Mammary epithelial cell (primary cell): ENCODE measurements at regions of chr12 and their contacts with region 1.

Region 1: GRCh38 chr12:98198261-98198982 is 317.0 kb upstream of the TMPO start:
- DNase-seq: peak; percentile 16
- H3K4me3 ChIP-seq: no peak overlapping the region
- H3K27ac ChIP-seq: no peak overlapping the region
- H3K4me1 ChIP-seq: no peaks in the 10 kb centered on the region
- H3K27me3 ChIP-seq: no peaks in the 10 kb centered on the region
- CTCF ChIP-seq: no peak

Region 2: DNA sequence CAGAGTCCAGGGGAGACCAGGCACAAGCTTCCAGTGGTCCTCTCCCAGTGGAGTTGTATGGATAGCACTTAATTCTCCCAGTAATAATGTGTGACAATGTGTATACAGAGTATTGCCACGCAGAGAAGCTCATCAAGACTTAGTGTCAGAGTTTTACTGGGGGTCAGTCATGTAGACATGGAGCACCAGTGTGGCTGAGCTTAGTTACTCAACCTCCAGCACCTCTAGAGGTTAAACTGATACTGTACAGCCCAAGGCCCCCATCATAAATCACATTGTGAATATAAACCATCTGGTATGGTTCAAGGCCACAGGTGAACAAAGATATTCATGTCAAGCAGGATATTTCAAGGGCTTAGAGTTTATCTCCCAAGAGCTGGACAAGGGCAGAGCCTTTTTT is 61.1 kb before region 1 on chr12:
- CTCF ChIA-PET with region 1: no interaction called
- dilution Hi-C with region 1: loop called (anchors 10 kb)
- in situ Hi-C with region 1: no loop called
- intact Hi-C with region 1: no loop called
- DNase-seq: no peak
- H3K4me3 ChIP-seq: no peak overlapping the region
- H3K27ac ChIP-seq: no peak overlapping the region
- H3K4me1 ChIP-seq: no peaks in the 10 kb centered on the region
- H3K27me3 ChIP-seq: peaks cover 3% of the 10 kb centered on the region
- CTCF ChIP-seq: no peak

Region 3: GRCh38 chr12:98259693-98260092 is 61.3 kb after region 1 on chr12:
- CTCF ChIA-PET with region 1: no interaction called
- dilution Hi-C with region 1: loop called (anchors 5 kb)
- in situ Hi-C with region 1: no loop called
- intact Hi-C with region 1: no loop called
- DNase-seq: no peak
- H3K4me3 ChIP-seq: no peak overlapping the region
- H3K27ac ChIP-seq: no peak overlapping the region
- H3K4me1 ChIP-seq: no peaks in the 10 kb centered on the region
- H3K27me3 ChIP-seq: peaks cover 2% of the 10 kb centered on the region
- CTCF ChIP-seq: no peak